Dendritic cell treated with granulocyte-macrophage colony-stimulating factor and Interleukin-4, amounts not matched to agents 40 ng/mL and 50 ng/mL, for 4 days (primary cell): ENCODE measurements at regions of chr6 and their contacts with region 1.

Region 1: GRCh38 chr6:91081452-91082067 is 494.7 kb upstream of the MAP3K7 start:
- H3K4me3 Mint-ChIP-seq: no peak overlapping the region
- H3K27ac Mint-ChIP-seq: no peak overlapping the region
- H3K4me1 Mint-ChIP-seq: no peaks in the 10 kb centered on the region
- H3K27me3 Mint-ChIP-seq: no peaks in the 10 kb centered on the region

Region 2: GRCh38 chr6:92647625-92648024 is 1566.1 kb after region 1 on chr6:
- intact Hi-C with region 1: loop called (anchors 5 kb)
- H3K4me3 Mint-ChIP-seq: no peak overlapping the region
- H3K27ac Mint-ChIP-seq: no peak overlapping the region
- H3K4me1 Mint-ChIP-seq: no peaks in the 10 kb centered on the region
- H3K27me3 Mint-ChIP-seq: no peaks in the 10 kb centered on the region